Heart left ventricle (tissue), 16 donors: ENCODE measurements at regions of chr16 and their contacts with region 1.

Region 1: DNA sequence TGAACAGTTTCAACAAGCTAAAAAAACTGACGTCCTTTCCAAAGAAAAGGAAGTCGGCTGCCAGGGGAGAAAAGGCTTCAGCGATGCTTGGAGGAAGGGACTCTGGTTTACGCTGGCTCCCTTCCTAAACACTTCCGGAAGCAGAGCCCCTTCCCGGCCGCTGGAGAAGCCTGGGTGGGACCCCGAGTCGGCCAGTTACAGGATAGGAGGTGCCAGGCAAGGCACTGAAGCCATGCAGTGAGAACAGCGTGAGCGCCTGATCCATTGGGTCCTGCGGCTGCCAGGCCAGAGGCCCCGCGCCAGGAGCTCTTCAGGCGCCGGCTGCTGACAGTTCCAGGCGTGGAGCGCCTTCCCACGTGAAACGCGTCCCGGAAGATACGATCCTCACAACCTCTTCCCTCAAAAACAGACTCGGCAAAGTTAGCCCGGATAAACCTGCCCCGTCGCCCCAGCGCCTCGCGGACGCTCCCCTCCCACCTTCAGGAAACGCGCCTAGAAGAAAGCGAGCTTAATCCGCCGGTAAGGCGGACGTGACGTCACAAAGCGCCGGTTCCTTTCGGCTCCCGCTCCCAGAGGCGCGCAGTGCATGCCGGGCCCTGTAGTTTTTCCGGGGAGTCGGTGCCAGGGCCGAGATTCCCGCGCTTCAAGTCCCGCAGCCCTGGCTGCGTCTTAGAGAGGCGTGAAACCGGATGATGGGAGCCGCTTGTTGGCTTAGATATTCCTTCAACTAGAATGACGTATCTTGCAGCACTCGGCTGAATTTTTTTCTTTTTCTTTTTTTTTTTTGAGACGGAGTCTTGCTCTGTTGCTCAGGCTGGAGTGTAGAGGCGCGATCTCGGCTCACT is at the start of gene ADAT1:
- DNase-seq: peak; percentile 98 to 99 (median 99)
- ATAC-seq: peak; percentile 96 to 97 (median 97)
- H3K4me3 ChIP-seq: peak within 1 kb of the TSS; percentile 57 to 89 (median 72)
- H3K27ac ChIP-seq: peak within 1 kb of the TSS; percentile 74 to 96 (median 92)
- H3K4me1 ChIP-seq: peaks cover 0 to 43% (median 19%) of the 10 kb centered on the region in 12 donors
- H3K27me3 ChIP-seq: no peaks in the 10 kb centered on the region
- CTCF ChIP-seq: no peak
- POLR2A ChIP-seq: peak in 1 of 2 donors; percentile 92
- total RNA-seq, gene ADAT1: 16.8 to 37.5 (median 24.1) TPM

Region 2: DNA sequence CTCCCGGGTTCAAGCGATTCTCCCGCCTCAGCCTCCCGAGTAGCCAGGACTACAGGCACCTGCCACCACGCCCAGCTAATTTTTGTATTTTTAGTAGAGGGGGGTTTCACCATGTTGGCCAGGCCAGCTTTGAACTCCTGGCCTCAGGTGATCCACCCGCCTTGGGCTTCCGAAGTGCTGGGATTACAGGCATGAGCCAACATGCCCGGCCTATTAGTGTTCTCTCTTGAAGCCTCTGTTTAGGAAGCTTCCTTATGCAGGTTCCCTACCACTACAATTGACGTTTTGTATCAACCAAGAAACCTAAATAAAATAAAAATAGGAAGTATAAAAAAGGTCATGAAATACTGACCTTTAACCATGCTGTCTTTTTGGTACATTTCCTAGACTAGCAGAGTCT is 103.1 kb before region 1 on chr16:
- intact Hi-C with region 1: loop called in 4 of 10 experiments (anchors 1 to 2 kb)
- DNase-seq: no peak
- ATAC-seq: no peak
- H3K4me3 ChIP-seq: no peak overlapping the region
- H3K27ac ChIP-seq: no peak overlapping the region
- H3K4me1 ChIP-seq: peaks cover 0 to 10% (median 6%) of the 10 kb centered on the region in 12 donors
- H3K27me3 ChIP-seq: no peaks in the 10 kb centered on the region
- CTCF ChIP-seq: no peak
- POLR2A ChIP-seq: no peak

Region 3: GRCh38 chr16:75555707-75556430 is 67.1 kb before region 1 on chr16 and contains the start of gene TMEM231:
- intact Hi-C with region 1: loop called in 5 of 10 experiments (anchors 2 to 10 kb)
- DNase-seq: peak; percentile 98 to 99 (median 99)
- ATAC-seq: peak; percentile 92 to 97 (median 96)
- H3K4me3 ChIP-seq: peak within 1 kb of the TSS; percentile 50 to 87 (median 76)
- H3K27ac ChIP-seq: peak within 1 kb of the TSS; percentile 64 to 89 (median 78)
- H3K4me1 ChIP-seq: peaks cover 0 to 39% (median 16%) of the 10 kb centered on the region in 12 donors
- H3K27me3 ChIP-seq: no peaks in the 10 kb centered on the region
- CTCF ChIP-seq: peak in 1 of 12 donors; percentile 9
- POLR2A ChIP-seq: peak in 1 of 2 donors; percentile 48
- total RNA-seq, gene TMEM231: 4.4 to 9.1 (median 7.1) TPM

Region 4: GRCh38 chr16:75593825-75594820 is 28.9 kb before region 1 on chr16:
- intact Hi-C with region 1: loop called in 1 of 10 experiments (anchors 2 kb)
- DNase-seq: no peak
- ATAC-seq: peak in 1 of 4 donors; percentile 23
- H3K4me3 ChIP-seq: no peak overlapping the region
- H3K27ac ChIP-seq: peak overlapping the region in 10 of 12 donors; percentile 13 to 82 (median 50)
- H3K4me1 ChIP-seq: peaks cover 0 to 52% (median 37%) of the 10 kb centered on the region in 12 donors
- H3K27me3 ChIP-seq: no peaks in the 10 kb centered on the region
- CTCF ChIP-seq: no peak
- POLR2A ChIP-seq: no peak

Region 5: GRCh38 chr16:75764154-75764768 is 141.3 kb after region 1 on chr16:
- intact Hi-C with region 1: loop called in 2 of 10 experiments (anchors 5 to 10 kb)
- DNase-seq: peak in 3 of 5 donors; percentile 40 to 50 (median 45)
- ATAC-seq: peak in 3 of 4 donors; percentile 90 to 95 (median 91)
- H3K4me3 ChIP-seq: no peak overlapping the region
- H3K27ac ChIP-seq: no peak overlapping the region
- H3K4me1 ChIP-seq: no peaks in the 10 kb centered on the region
- H3K27me3 ChIP-seq: no peaks in the 10 kb centered on the region
- CTCF ChIP-seq: peak; percentile 64 to 87 (median 78)
- POLR2A ChIP-seq: no peak

Region 6: DNA sequence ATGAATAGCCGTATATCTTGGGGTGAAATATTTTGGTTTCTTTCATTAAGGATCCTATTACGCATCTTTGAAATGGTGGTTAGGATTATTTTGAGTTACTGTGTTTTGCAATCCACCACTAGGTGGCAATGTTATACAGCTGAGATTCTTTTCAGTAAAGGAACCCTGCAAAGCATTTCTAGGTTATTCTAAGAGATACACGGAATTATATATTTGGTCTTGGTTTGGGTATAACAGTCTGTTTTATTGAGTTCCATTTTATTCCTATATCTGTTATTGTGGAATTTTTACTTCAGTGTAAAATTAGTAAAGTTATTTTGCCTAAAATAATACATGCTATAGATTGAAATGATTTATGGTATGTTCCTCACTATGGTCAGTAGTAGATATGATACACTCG is 166.3 kb after region 1 on chr16:
- intact Hi-C with region 1: no loop called
- DNase-seq: no peak
- ATAC-seq: peak in 2 of 4 donors; percentile 39 to 47
- H3K4me3 ChIP-seq: no peak overlapping the region
- H3K27ac ChIP-seq: no peak overlapping the region
- H3K4me1 ChIP-seq: no peaks in the 10 kb centered on the region
- H3K27me3 ChIP-seq: peaks cover 0 to 19% (median 5%) of the 10 kb centered on the region in 9 donors
- CTCF ChIP-seq: peak; percentile 70 to 89 (median 83)
- POLR2A ChIP-seq: no peak